ENCODE measurements at regions of chr19 and their contacts with region 1.

Region 1: GRCh38 chr19:54203151-54203611 is 2.5 kb downstream of the RPS9 start:
- DNase-seq: no peak
- H3K4me3 ChIP-seq: peak overlapping the region in 3 of 4 experiments; percentile 7 to 96 (median 81); a peak in 4 of 8 replicates
- H3K27ac ChIP-seq: no peak overlapping the region
- H3K4me1 ChIP-seq: peaks cover 12 to 25% (median 17%) of the 10 kb centered on the region in 4 experiments
- H3K27me3 ChIP-seq: no peaks in the 10 kb centered on the region
- CTCF ChIP-seq: no peak
- EP300 ChIP-seq: no peak
- POLR2A ChIP-seq: peak in 1 of 2 experiments; percentile 73; a peak in 2 of 3 replicates
- RAD21 ChIP-seq: no peak

Region 2: GRCh38 chr19:54104998-54105715 is 98.0 kb before region 1 on chr19:
- CTCF ChIA-PET with region 1: no interaction called
- POLR2A ChIA-PET with region 1: no interaction called
- DNase-seq: no peak
- H3K4me3 ChIP-seq: no peak overlapping the region
- H3K27ac ChIP-seq: no peak overlapping the region
- H3K4me1 ChIP-seq: 0 out of 7 replicates have a peak, but pooled peaks cover 0 to 2% (median 0%) of the 10 kb centered on the region in 4 experiments
- H3K27me3 ChIP-seq: no peaks in the 10 kb centered on the region
- CTCF ChIP-seq: no peak
- EP300 ChIP-seq: no peak
- POLR2A ChIP-seq: no peak
- RAD21 ChIP-seq: no peak

Region 3: DNA sequence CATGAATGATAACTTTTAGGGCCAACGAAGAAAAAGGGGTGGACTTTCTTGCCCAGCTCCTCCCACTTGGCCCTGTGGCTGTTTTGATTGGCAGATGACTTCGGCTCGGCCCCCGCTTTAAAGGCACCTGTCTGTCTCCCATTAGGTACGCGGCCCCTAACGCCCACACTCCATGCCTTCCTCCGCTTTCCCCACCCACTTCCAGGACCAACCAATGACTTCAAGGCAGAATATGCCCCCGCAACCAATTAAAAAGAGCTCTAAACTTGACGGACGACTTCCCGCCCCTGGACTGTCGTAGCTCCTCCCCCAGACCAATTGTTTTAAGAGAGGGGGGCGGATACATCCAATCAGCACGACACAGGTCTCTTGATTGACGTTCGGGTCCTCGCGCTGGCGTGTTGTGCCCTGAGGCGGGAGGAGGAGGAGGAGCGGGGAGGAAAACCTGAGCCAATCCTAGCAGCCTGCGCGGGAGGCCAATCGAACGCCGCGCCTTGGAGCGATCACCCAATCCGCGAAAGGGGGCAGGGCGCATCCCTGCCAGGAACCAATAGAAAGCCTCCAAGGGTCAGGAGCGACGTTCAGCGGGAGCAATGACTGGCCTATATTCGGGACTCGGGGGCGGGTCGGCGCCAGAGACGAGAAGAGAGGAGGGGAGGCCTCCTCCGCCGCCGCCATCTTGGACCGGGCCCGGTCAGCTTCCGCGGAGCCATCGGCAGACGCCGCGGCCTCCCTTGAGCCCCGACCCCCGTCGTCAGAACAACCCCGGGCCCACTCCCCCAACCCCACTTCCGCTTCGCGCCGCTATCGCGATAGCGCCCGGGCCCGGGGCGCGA is 65.9 kb before region 1 on chr19 and contains the start of gene CNOT3:
- CTCF ChIA-PET with region 1: no interaction called
- POLR2A ChIA-PET with region 1: interaction called, 11 read pairs
- DNase-seq: peak; percentile 95 to 100
- H3K4me3 ChIP-seq: peak within 1 kb of the TSS; percentile 68 to 84 (median 84)
- H3K27ac ChIP-seq: peak within 1 kb of the TSS; percentile 90
- H3K4me1 ChIP-seq: peaks cover 0 to 26% (median 7%) of the 10 kb centered on the region in 4 experiments; a peak in 5 of 7 replicates
- H3K27me3 ChIP-seq: no peaks in the 10 kb centered on the region
- CTCF ChIP-seq: no peak; a peak in 1 of 4 replicates
- EP300 ChIP-seq: no peak
- POLR2A ChIP-seq: peak; percentile 89
- RAD21 ChIP-seq: no peak
- total RNA-seq, gene CNOT3: 82.9 and 86.4 TPM in 2 replicates

Region 4: DNA sequence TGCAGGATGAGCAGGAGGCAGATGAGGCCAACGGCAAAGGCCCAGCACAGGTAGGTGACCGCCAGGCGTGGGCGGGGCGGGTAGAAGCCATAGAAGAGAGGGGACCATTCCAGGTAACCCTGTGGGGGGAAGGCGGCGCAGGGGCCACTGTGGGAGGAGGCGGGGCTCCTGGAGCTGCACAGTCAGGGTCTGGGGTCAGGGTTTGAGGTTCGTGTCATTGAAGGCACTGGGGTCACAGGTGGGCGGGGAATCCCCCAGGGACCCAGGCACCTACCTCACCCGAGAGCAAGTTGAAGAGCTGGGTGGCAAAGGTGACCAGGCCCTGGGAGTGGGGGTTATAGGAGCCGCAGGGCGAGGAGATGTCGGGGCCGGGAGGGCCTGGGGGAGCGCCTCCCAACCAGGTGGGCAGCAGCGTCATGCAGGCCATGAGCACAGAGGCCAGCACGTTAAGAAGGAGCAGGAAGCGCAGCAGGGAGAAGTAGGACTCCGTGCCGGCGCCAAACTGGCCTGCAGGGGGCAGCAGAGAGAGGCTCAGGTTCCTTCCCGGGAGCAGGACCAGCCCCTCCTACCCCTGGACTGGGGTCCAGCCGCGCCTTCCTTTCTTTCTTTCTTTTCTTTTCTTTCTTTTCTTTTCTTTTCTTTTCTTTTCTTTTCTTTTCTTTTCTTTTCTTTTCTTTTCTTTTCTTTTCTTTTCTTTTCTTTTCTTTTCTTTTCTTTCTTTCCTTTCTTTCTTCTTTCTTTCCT is 34.8 kb before region 1 on chr19:
- CTCF ChIA-PET with region 1: interaction called, 7 read pairs
- POLR2A ChIA-PET with region 1: interaction called, 30 read pairs
- DNase-seq: peak in 1 of 2 experiments; percentile 100
- H3K4me3 ChIP-seq: peak overlapping the region in 2 of 4 experiments; percentile 5 to 34; a peak in 2 of 8 replicates
- H3K27ac ChIP-seq: no peak overlapping the region
- H3K4me1 ChIP-seq: peaks cover 0 to 10% (median 6%) of the 10 kb centered on the region in 4 experiments; a peak in 6 of 7 replicates
- H3K27me3 ChIP-seq: peaks cover 0 to 7% (median 4%) of the 10 kb centered on the region in 4 experiments; a peak in 4 of 7 replicates
- CTCF ChIP-seq: peak; percentile 81 to 92 (median 91)
- EP300 ChIP-seq: no peak
- POLR2A ChIP-seq: no peak
- RAD21 ChIP-seq: peak; percentile 57

Region 5: GRCh38 chr19:54218960-54219661 is 15.9 kb after region 1 on chr19:
- CTCF ChIA-PET with region 1: no interaction called
- POLR2A ChIA-PET with region 1: interaction called, 909 read pairs
- DNase-seq: no peak
- H3K4me3 ChIP-seq: no peak overlapping the region
- H3K27ac ChIP-seq: no peak overlapping the region
- H3K4me1 ChIP-seq: peaks cover 0 to 1% (median 0%) of the 10 kb centered on the region in 4 experiments; a peak in 2 of 7 replicates
- H3K27me3 ChIP-seq: no peaks in the 10 kb centered on the region
- CTCF ChIP-seq: no peak
- EP300 ChIP-seq: no peak
- POLR2A ChIP-seq: no peak
- RAD21 ChIP-seq: no peak

Region 6: DNA sequence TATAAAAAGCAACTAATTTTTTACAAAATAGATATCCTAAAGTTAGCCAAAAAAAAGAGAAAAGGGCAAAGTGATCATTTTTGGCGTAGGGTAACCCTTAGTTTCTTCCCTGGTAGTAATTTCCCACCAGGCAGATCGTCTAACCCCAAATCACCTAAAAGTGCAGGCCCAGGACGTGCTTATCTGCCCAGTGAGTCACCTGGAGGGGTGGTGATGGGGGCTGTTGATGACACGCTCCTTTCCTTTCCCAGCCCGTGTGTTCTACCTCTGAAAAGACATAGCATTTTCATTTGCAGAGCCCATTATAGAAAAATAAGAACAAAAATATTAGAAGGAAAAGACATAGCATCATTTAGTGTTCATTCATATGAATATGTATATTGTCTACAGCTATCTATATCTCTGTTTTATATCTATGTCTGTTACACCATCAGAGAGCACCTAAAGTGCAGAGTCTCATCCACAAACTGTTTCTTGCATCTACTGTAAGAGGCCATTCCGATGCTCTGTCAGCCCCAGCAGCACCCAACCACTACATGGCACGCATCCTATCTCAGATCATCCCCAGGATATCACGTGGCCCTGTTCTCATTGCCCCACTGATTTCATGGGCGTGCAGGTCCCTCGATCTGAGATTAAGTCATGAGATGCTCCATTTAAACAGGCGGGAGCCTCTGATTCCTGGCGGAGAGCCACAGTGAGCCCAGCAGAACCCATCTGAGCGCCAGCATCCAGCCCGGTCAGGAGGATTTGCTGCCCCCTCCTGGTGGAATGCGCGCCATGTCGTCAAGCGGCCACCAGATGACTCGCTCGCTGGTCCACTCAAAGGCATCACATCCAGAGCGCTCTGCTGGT is 28.1 kb after region 1 on chr19:
- CTCF ChIA-PET with region 1: interaction called, 6 read pairs
- POLR2A ChIA-PET with region 1: interaction called, 73 read pairs
- DNase-seq: peak; percentile 56 to 99
- H3K4me3 ChIP-seq: no peak overlapping the region; a peak in 2 of 8 replicates
- H3K27ac ChIP-seq: no peak overlapping the region
- H3K4me1 ChIP-seq: no peaks in the 10 kb centered on the region
- H3K27me3 ChIP-seq: peaks cover 0 to 7% (median 2%) of the 10 kb centered on the region in 4 experiments; a peak in 3 of 7 replicates
- CTCF ChIP-seq: peak; percentile 98
- EP300 ChIP-seq: no peak
- POLR2A ChIP-seq: no peak
- RAD21 ChIP-seq: peak; percentile 80 to 87

Region 7: DNA sequence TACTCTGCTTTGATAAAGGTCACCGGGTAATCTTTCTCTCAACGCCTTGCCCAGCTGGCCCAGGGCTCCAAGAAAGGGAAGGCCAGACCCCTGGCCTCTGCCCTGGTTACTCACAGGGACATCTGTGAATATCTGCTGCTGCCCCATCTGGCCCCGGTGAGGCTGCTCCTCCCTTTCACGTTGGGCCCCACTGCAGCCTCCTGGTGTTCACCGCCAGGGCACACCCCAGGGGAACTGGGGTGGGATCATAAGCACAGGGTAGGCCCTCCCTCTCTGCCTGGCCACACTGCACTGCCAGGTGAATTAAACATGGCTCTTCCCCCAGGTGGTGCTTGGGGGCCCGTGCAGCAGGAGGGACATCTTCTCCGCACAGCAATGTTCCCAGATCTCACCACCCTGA is 148.9 kb after region 1 on chr19:
- CTCF ChIA-PET with region 1: no interaction called
- POLR2A ChIA-PET with region 1: interaction called, 11 read pairs
- DNase-seq: no peak
- H3K4me3 ChIP-seq: no peak overlapping the region
- H3K27ac ChIP-seq: no peak overlapping the region
- H3K4me1 ChIP-seq: no peaks in the 10 kb centered on the region
- H3K27me3 ChIP-seq: no peaks in the 10 kb centered on the region
- CTCF ChIP-seq: no peak
- EP300 ChIP-seq: no peak
- POLR2A ChIP-seq: no peak
- RAD21 ChIP-seq: no peak

Measured in H1 (cell line).